ENCODE measurements at regions of chr2 and their contacts with region 1.

Region 1: GRCh38 chr2:69741619-69742466 is at the start of gene ANXA4:
- DNase-seq: peak; percentile 71 to 86
- H3K4me3 ChIP-seq: peak within 1 kb of the TSS; percentile 71
- H3K27ac ChIP-seq: peak within 1 kb of the TSS; percentile 72
- H3K4me1 ChIP-seq: peaks cover 51% of the 10 kb centered on the region
- H3K27me3 ChIP-seq: no peaks in the 10 kb centered on the region
- CTCF ChIP-seq: no peak
- total RNA-seq, gene ANXA4: 82.9 and 109 TPM in 2 replicates

Region 2: DNA sequence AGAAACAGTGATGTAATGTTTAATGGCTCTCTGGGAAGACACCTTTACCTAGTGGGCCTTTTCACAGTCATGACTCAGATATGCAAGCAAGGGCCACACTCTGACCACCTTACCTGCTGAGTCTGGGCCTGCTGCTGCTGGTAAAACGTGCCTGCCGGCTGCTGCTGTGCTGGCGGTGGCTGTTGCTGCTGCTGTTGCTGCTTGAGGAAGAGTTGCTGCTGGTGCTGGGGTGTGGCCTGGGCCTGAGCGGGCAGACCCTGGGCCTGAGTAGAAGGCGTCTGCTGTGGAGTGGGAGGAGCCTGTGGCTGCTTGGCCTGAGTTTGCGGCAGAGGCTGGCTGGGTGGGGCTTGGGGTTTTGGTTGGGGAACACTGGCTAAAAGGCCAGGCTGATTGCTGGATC is 223.0 kb before region 1 on chr2:
- CTCF ChIA-PET with region 1: no interaction called
- POLR2A ChIA-PET with region 1: no interaction called
- intact Hi-C with region 1: no loop called
- DNase-seq: peak; percentile 41 to 51
- H3K4me3 ChIP-seq: no peak overlapping the region
- H3K27ac ChIP-seq: peak overlapping the region; percentile 9; the same call in 1 of the 2 replicates
- H3K4me1 ChIP-seq: 0 out of 2 replicates have a peak, but pooled peaks cover 8% of the 10 kb centered on the region
- H3K27me3 ChIP-seq: no peaks in the 10 kb centered on the region
- CTCF ChIP-seq: no peak

Region 3: DNA sequence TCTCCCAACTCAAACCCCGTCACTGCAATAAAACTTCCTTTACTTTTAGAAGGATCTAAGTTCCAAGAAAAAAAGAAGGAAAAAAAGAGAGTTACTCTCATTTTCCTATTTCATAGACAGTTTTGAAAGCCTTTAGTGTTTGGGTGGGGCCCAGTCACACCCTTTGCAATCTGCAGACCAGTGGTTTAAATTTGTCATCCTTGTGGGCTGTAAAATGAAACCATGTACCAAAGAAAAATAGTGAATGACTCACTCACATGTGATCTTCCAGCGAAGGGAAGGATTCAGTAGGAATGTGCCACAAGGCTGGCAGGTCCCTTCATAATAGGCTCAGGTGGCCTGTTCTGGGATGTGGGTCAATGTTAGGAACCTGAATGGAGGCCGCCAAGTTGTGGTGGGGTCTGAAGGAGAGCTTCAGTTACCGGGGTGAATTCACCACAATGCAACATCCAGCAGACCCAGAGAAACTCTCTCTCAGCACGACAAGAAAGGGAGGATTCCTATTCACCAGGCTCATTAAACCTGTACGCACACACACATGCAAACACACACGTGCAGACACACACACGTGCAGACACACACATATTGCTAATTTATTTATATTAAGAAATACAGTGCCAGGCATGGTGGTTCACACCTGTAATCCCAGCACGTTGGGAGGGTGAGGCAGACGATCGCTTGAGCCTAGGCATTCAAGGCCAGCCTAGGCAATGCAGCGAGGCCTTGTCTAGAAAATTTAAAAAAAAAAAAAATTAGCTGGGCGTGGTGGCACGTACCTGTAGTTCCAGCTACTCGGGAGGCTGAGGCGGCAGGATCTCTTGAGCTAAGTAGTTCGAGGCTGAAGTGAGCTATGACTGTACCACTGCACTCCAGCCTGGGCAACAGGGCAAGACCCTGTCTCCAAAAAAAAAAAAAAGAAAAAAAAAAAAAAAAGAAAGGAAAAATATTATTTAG is 28.6 kb after region 1 on chr2:
- CTCF ChIA-PET with region 1: interaction called, 5 read pairs
- POLR2A ChIA-PET with region 1: interaction called, 7 read pairs
- intact Hi-C with region 1: loop called (anchors 2 kb)
- DNase-seq: peak; percentile 47 to 90
- H3K4me3 ChIP-seq: 0 out of 2 replicates have a peak overlapping the region, but pooled peaks have one; percentile 7
- H3K27ac ChIP-seq: peak overlapping the region; percentile 63
- H3K4me1 ChIP-seq: peaks cover 67% of the 10 kb centered on the region
- H3K27me3 ChIP-seq: no peaks in the 10 kb centered on the region
- CTCF ChIP-seq: no peak

Region 4: DNA sequence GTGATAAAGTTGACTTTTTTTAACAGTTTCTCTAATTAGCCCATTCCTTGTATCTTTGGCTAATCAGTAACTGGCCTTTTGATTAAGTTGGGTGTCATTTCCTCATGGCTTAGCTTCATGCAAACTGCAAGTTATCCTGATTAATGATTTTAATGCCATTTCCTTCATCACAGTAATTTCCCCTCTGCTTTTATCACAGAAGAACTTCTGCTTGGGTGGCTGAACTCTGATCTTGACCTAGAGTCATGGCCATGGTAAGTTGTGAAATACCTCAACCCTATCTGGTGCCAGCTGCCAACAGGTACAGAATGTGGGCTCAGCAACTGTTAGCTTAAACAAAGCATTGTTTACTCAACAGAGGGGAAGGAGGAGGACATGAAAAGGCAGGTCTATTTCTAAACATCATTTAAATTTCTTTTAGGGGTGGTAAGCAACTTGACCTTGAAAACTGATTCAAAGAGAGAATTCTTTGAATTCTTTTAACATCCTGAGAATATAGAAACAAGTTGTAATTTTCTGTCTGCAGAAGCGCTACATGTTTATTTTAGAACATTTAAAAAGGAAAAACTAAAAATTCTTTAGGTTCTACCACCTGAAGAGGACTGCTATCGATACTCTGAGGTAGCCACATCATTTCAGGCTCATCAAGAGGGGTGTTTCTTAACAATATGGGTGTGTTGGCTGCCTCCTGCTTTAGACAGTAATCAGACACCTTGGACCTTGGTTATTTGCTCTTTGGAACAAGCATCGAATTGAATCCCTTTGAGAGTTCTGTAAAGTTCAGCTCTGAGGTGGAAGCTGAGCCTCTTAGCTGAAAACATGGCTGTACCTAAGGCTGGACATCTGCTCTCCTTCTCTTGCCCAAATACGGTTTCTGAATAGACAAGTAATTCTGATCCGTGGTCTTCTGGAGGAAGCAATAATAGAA is 39.7 kb after region 1 on chr2:
- CTCF ChIA-PET with region 1: no interaction called
- POLR2A ChIA-PET with region 1: no interaction called
- intact Hi-C with region 1: no loop called
- DNase-seq: peak; percentile 33 to 78
- H3K4me3 ChIP-seq: no peak overlapping the region
- H3K27ac ChIP-seq: peak overlapping the region; percentile 66
- H3K4me1 ChIP-seq: peaks cover 56% of the 10 kb centered on the region
- H3K27me3 ChIP-seq: no peaks in the 10 kb centered on the region
- CTCF ChIP-seq: no peak

Region 5: GRCh38 chr2:69798909-69799526 is 57.2 kb after region 1 on chr2:
- CTCF ChIA-PET with region 1: interaction called, 5 read pairs
- POLR2A ChIA-PET with region 1: no interaction called
- intact Hi-C with region 1: loop called (anchors 2 kb)
- DNase-seq: peak; percentile 37 to 75
- H3K4me3 ChIP-seq: no peak overlapping the region
- H3K27ac ChIP-seq: peak overlapping the region; percentile 40
- H3K4me1 ChIP-seq: peaks cover 26% of the 10 kb centered on the region
- H3K27me3 ChIP-seq: no peaks in the 10 kb centered on the region
- CTCF ChIP-seq: no peak

Region 6: GRCh38 chr2:69816923-69817542 is 75.2 kb after region 1 on chr2:
- CTCF ChIA-PET with region 1: interaction called, 8 read pairs
- POLR2A ChIA-PET with region 1: interaction called, 3 read pairs
- intact Hi-C with region 1: loop called (anchors 1 kb)
- DNase-seq: peak; percentile 59 to 81
- H3K4me3 ChIP-seq: no peak overlapping the region
- H3K27ac ChIP-seq: no peak overlapping the region
- H3K4me1 ChIP-seq: no peaks in the 10 kb centered on the region
- H3K27me3 ChIP-seq: no peaks in the 10 kb centered on the region
- CTCF ChIP-seq: peak; percentile 96

Region 7: DNA sequence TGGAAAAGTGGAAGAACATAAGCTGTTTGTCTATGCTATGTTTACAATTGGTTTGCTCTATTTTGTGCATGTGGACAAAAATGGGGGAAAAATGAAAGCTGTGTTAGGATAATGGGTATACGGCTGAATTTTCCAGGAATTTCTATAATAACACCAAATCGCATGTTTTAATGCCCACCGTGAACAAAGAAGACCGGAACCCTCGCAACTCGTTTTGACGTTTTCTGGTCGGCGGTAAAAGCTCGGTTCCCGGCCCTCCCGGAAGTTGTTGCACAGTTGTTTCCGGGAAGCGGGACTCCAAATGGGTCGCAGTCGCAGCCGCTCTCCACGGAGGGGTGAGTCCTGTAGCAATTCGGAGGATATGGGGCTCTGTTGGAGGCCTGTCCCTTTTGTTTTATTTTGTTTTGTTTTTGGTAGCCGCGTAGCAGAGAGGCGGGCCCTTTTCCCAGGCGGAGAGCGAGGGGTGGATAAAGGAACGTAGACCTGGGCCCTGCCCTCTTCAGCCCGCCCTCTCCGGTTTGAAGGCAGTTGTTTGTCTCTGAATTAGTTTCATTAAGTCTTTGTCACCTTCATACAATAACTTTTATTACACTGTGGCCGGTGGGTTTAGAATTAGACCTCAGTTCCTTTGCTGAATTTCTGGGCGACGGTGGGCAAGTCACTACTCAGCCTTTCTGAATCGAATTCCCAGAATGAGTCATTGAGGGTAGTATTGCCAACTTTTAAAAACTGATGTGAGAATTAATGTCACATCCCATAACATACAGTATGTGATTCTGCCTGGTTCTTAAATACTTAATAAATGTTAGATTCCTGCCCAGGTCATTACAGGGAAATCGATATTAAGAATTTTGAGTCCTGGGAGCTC is 152.1 kb after region 1 on chr2 and contains the start of gene SNRNP27:
- CTCF ChIA-PET with region 1: no interaction called
- POLR2A ChIA-PET with region 1: no interaction called
- intact Hi-C with region 1: loop called (anchors 5 kb)
- DNase-seq: peak; percentile 60 to 67
- H3K4me3 ChIP-seq: peak within 1 kb of the TSS; percentile 74
- H3K27ac ChIP-seq: peak within 1 kb of the TSS; percentile 38
- H3K4me1 ChIP-seq: peaks cover 13% of the 10 kb centered on the region
- H3K27me3 ChIP-seq: no peaks in the 10 kb centered on the region
- CTCF ChIP-seq: no peak
- total RNA-seq, gene SNRNP27: 29.9 and 38.1 TPM in 2 replicates